GM12878 (cell line): ENCODE measurements at regions of chr18 and their contacts with region 1.

Region 1: GRCh38 chr18:4270016-4270415 is 185.1 kb downstream of the DLGAP1 start:
- DNase-seq: peak; percentile 60
- ATAC-seq: peak; percentile 87
- H3K4me3 ChIP-seq: no peak overlapping the region
- H3K27ac ChIP-seq: no peak overlapping the region
- H3K4me1 ChIP-seq: no peaks in the 10 kb centered on the region
- H3K27me3 ChIP-seq: no peaks in the 10 kb centered on the region
- CTCF ChIP-seq: no peak
- EP300 ChIP-seq: peak in 1 of 2 experiments; percentile 54; a peak in 2 of 4 replicates
- POLR2A ChIP-seq: no peak
- RAD21 ChIP-seq: no peak

Region 2: GRCh38 chr18:4236940-4237663 is 32.9 kb before region 1 on chr18:
- CTCF ChIA-PET with region 1: interaction called, 8 read pairs
- POLR2A ChIA-PET with region 1: interaction called, 8 read pairs
- RAD21 ChIA-PET with region 1: interaction called, 9 read pairs
- SMC1A ChIA-PET with region 1: interaction called, 48 read pairs
- in situ Hi-C with region 1: no loop called
- intact Hi-C with region 1: no loop called
- DNase-seq: no peak
- ATAC-seq: peak; percentile 77
- H3K4me3 ChIP-seq: no peak overlapping the region
- H3K27ac ChIP-seq: no peak overlapping the region
- H3K4me1 ChIP-seq: no peaks in the 10 kb centered on the region
- H3K27me3 ChIP-seq: no peaks in the 10 kb centered on the region
- CTCF ChIP-seq: no peak
- EP300 ChIP-seq: peak; percentile 28 to 41; a peak in 1 of 4 replicates
- POLR2A ChIP-seq: no peak
- RAD21 ChIP-seq: no peak

Region 3: GRCh38 chr18:4283746-4284291 is 13.8 kb after region 1 on chr18:
- CTCF ChIA-PET with region 1: interaction called, 4 read pairs
- POLR2A ChIA-PET with region 1: interaction called, 13 read pairs
- RAD21 ChIA-PET with region 1: interaction called, 28 read pairs
- SMC1A ChIA-PET with region 1: interaction called, 49 read pairs
- in situ Hi-C with region 1: no loop called
- intact Hi-C with region 1: no loop called
- DNase-seq: no peak
- ATAC-seq: peak; percentile 45
- H3K4me3 ChIP-seq: no peak overlapping the region
- H3K27ac ChIP-seq: no peak overlapping the region
- H3K4me1 ChIP-seq: no peaks in the 10 kb centered on the region
- H3K27me3 ChIP-seq: no peaks in the 10 kb centered on the region
- CTCF ChIP-seq: no peak
- EP300 ChIP-seq: no peak
- POLR2A ChIP-seq: no peak
- RAD21 ChIP-seq: no peak

Region 4: GRCh38 chr18:4333043-4333442 is 63.0 kb after region 1 on chr18:
- CTCF ChIA-PET with region 1: interaction called, 3 read pairs
- POLR2A ChIA-PET with region 1: interaction called, 3 read pairs
- RAD21 ChIA-PET with region 1: interaction called, 4 read pairs
- SMC1A ChIA-PET with region 1: interaction called, 12 read pairs
- in situ Hi-C with region 1: no loop called
- intact Hi-C with region 1: no loop called
- DNase-seq: no peak
- ATAC-seq: peak; percentile 17; the same call in 2 of the 3 replicates
- H3K4me3 ChIP-seq: no peak overlapping the region
- H3K27ac ChIP-seq: no peak overlapping the region
- H3K4me1 ChIP-seq: no peaks in the 10 kb centered on the region
- H3K27me3 ChIP-seq: no peaks in the 10 kb centered on the region
- CTCF ChIP-seq: no peak
- EP300 ChIP-seq: no peak
- POLR2A ChIP-seq: no peak
- RAD21 ChIP-seq: no peak

Region 5: GRCh38 chr18:4391859-4392258 is 121.8 kb after region 1 on chr18:
- CTCF ChIA-PET with region 1: no interaction called
- POLR2A ChIA-PET with region 1: interaction called, 7 read pairs
- RAD21 ChIA-PET with region 1: interaction called, 5 read pairs
- SMC1A ChIA-PET with region 1: interaction called, 18 read pairs
- in situ Hi-C with region 1: no loop called
- intact Hi-C with region 1: loop called (anchors 5 kb)
- DNase-seq: peak; percentile 60
- ATAC-seq: peak; percentile 65
- H3K4me3 ChIP-seq: no peak overlapping the region
- H3K27ac ChIP-seq: 0 out of 2 replicates have a peak overlapping the region, but pooled peaks have one; percentile 20
- H3K4me1 ChIP-seq: no peaks in the 10 kb centered on the region
- H3K27me3 ChIP-seq: no peaks in the 10 kb centered on the region
- CTCF ChIP-seq: no peak
- EP300 ChIP-seq: peak; percentile 96 to 99
- POLR2A ChIP-seq: no peak
- RAD21 ChIP-seq: no peak

Region 6: DNA sequence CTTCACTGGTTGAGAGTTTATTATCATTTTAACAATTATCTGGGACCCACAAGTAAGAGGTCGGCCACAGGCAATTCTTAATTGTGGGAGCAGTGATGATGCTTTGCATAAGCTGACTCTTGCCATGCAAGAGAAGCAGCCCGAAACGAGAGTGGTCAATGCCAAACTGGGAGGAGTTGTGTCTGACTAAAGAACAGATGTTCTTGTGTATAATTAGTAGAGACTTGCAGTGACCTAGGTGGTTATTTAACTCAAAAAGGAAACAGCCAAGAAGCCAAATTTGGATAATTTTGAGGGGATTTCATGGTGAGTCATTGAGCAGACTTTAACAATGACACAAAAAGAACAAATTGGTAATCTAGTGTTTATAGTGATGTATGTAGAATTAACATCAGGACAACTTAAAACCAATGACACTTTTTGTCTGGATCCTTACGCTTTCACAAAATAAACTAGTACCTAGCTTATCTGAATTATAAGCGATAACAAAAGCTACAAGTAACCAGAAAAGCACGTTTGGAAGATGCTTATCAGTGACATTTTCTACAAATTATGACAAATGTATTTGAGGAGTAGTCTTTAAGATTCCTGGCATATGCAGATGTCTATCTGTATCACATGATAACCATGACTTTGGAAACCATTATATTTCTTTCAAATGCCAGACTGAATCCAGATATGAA is 369.8 kb after region 1 on chr18:
- CTCF ChIA-PET with region 1: no interaction called
- POLR2A ChIA-PET with region 1: interaction called, 4 read pairs
- RAD21 ChIA-PET with region 1: interaction called, 6 read pairs
- SMC1A ChIA-PET with region 1: interaction called, 11 read pairs
- in situ Hi-C with region 1: no loop called
- intact Hi-C with region 1: no loop called
- DNase-seq: peak; percentile 97
- ATAC-seq: peak; percentile 93
- H3K4me3 ChIP-seq: no peak overlapping the region
- H3K27ac ChIP-seq: peak overlapping the region; percentile 66
- H3K4me1 ChIP-seq: peaks cover 3% of the 10 kb centered on the region
- H3K27me3 ChIP-seq: no peaks in the 10 kb centered on the region
- CTCF ChIP-seq: no peak
- EP300 ChIP-seq: peak; percentile 96 to 97
- POLR2A ChIP-seq: no peak
- RAD21 ChIP-seq: no peak

Region 7: DNA sequence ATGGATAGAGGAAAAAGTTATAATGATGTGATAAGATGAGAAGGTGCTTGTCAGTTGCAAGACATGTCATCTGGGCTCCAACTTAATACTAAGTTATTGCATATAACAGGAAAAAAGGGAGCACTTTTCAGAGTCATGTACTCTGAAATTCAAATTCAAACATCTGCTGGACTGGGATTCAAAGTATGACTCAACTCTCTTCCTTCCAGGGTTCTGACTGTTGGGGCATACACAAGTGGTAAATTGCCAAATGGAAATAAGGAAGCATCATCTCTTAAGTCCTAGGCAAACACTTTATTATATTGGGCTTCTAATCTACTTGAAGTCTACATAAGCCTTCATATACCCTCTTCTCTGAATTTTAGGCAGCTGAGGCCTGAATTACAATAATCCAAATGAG is 980.6 kb after region 1 on chr18:
- CTCF ChIA-PET with region 1: no interaction called
- POLR2A ChIA-PET with region 1: no interaction called
- RAD21 ChIA-PET with region 1: no interaction called
- SMC1A ChIA-PET with region 1: no interaction called
- in situ Hi-C with region 1: no loop called
- intact Hi-C with region 1: no loop called
- DNase-seq: no peak
- ATAC-seq: no peak
- H3K4me3 ChIP-seq: no peak overlapping the region
- H3K27ac ChIP-seq: no peak overlapping the region
- H3K4me1 ChIP-seq: no peaks in the 10 kb centered on the region
- H3K27me3 ChIP-seq: no peaks in the 10 kb centered on the region
- CTCF ChIP-seq: no peak
- EP300 ChIP-seq: no peak
- POLR2A ChIP-seq: no peak
- RAD21 ChIP-seq: no peak